PC-9 (cell line): ENCODE measurements at regions of chr6 and their contacts with region 1.

Region 1: DNA sequence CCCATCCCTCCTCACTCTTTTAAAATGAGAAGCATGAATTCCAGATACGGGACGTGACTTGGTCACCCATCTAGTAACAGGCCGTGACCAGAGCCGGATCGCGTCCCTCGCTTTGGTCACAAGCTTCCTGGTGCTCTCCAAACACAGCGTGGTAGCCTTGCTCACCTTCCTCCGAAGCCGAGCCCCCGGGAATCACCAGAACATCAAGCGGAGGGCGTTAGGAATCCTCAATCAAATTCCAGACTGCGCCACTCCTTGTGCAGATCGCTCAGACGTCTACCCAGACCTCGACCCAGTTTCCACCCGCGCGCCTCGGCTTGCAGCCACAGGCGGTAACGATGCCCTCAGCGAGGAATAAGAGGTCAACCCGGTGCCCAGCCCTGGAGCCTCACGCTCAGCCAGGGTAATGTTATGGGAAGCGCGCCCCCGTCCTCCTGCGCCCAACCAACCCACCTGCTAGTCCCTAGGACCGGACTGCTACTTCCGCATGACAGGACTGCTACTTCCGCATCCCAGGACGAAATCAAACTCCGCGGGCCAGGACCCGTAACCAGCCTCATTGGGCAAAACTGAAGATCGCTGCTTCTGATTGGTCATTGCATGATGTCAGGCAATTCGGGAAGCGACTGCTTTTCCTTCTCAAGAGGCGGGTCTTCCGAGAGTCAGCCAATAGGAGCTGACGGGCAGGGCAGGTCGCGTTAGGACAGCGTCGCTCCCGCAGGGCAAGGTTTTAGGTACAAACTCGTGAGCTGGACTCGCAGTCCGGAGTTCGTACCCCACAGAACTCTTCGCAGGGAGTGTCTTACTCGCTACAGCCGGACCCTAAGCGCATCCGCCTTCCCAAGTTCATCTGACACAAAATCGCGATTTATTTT is at the start of gene MTFR2:
- DNase-seq: peak; percentile 93 to 100
- H3K4me3 ChIP-seq: peak within 1 kb of the TSS; percentile 79
- H3K27ac ChIP-seq: peak within 1 kb of the TSS; percentile 13; the same call in 1 of the 2 replicates
- H3K4me1 ChIP-seq: peaks cover 20% of the 10 kb centered on the region
- H3K27me3 ChIP-seq: no peaks in the 10 kb centered on the region
- CTCF ChIP-seq: no peak
- total RNA-seq, gene MTFR2: 10.5 and 12.6 TPM in 2 replicates

Region 2: GRCh38 chr6:134903448-134903847 is 1346.6 kb before region 1 on chr6:
- CTCF ChIA-PET with region 1: no interaction called
- POLR2A ChIA-PET with region 1: interaction called, 15 read pairs
- intact Hi-C with region 1: no loop called
- DNase-seq: no peak
- H3K4me3 ChIP-seq: no peak overlapping the region
- H3K27ac ChIP-seq: no peak overlapping the region
- H3K4me1 ChIP-seq: 0 out of 2 replicates have a peak, but pooled peaks cover 4% of the 10 kb centered on the region
- H3K27me3 ChIP-seq: no peaks in the 10 kb centered on the region
- CTCF ChIP-seq: no peak

Region 3: DNA sequence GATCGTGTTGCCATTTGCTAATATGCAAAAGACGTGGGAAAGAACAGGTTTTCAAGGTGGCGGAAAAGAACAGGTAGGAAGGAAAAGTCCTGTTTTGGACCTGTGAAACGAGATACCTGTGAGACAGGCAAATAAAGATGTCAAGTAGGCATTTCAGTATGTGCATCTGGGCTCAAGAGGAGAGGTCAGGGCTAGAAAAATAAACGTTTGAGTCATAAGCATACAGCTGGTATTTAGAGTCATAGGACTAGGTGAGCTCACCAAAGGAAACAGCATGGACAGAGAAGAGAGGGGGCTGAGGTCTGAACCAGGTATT is 14.9 kb before region 1 on chr6:
- CTCF ChIA-PET with region 1: no interaction called
- POLR2A ChIA-PET with region 1: no interaction called
- intact Hi-C with region 1: no loop called
- DNase-seq: peak in 1 of 2 experiments; percentile 67
- H3K4me3 ChIP-seq: no peak overlapping the region
- H3K27ac ChIP-seq: no peak overlapping the region
- H3K4me1 ChIP-seq: no peaks in the 10 kb centered on the region
- H3K27me3 ChIP-seq: no peaks in the 10 kb centered on the region
- CTCF ChIP-seq: no peak

Region 4: GRCh38 chr6:136289579-136290409 is 39.7 kb after region 1 on chr6 and contains the start of gene BCLAF1:
- CTCF ChIA-PET with region 1: no interaction called
- POLR2A ChIA-PET with region 1: interaction called, 8 read pairs
- intact Hi-C with region 1: loop called (anchors 2 kb)
- DNase-seq: peak; percentile 98 to 99
- H3K4me3 ChIP-seq: peak within 1 kb of the TSS; percentile 93
- H3K27ac ChIP-seq: peak within 1 kb of the TSS; percentile 97
- H3K4me1 ChIP-seq: peaks cover 51% of the 10 kb centered on the region
- H3K27me3 ChIP-seq: no peaks in the 10 kb centered on the region
- CTCF ChIP-seq: no peak
- total RNA-seq, gene BCLAF1: 76.4 and 109 TPM in 2 replicates

Region 5: DNA sequence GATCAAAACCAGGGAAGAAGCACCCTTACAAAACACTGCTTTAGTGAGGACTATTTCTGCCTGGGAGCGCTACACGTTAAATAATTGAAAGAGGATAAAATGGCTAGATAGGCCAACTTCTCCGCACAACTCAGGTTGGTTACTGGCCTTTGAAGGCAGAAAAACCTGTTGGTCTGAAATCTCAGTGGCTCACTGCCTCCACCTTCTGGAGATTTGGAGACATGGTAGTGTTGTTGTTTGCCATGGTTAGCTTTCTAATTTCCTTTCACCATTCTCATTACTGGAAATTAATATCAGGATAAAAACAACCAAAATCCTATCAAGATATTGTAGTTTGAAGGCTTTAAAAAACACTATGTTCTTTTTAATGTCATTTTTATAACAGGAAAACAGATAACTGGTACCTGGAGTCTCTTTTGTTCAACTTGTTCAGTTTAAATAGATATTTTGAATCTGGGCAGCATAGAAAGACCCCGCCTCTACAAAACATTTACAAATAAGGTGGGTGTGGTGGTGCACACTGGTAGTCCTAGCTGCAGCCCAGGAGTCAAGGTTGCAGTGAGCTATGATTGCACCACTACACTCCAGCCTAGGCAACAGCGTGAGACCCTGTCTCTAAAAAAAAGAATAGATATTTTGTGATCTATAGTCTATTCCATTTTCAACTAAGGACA is 67.1 kb after region 1 on chr6:
- CTCF ChIA-PET with region 1: no interaction called
- POLR2A ChIA-PET with region 1: no interaction called
- intact Hi-C with region 1: loop called (anchors 1 kb)
- DNase-seq: peak; percentile 45 to 60
- H3K4me3 ChIP-seq: no peak overlapping the region
- H3K27ac ChIP-seq: no peak overlapping the region
- H3K4me1 ChIP-seq: no peaks in the 10 kb centered on the region
- H3K27me3 ChIP-seq: no peaks in the 10 kb centered on the region
- CTCF ChIP-seq: peak; percentile 94

Region 6: GRCh38 chr6:136635615-136636014 is 385.6 kb after region 1 on chr6:
- CTCF ChIA-PET with region 1: no interaction called
- POLR2A ChIA-PET with region 1: interaction called, 21 read pairs
- intact Hi-C with region 1: no loop called
- DNase-seq: no peak
- H3K4me3 ChIP-seq: no peak overlapping the region
- H3K27ac ChIP-seq: no peak overlapping the region
- H3K4me1 ChIP-seq: no peaks in the 10 kb centered on the region
- H3K27me3 ChIP-seq: no peaks in the 10 kb centered on the region
- CTCF ChIP-seq: no peak